Posterior cingulate gyrus (tissue), 11 donors: ENCODE measurements at regions of chr5 and their contacts with region 1.

Region 1: GRCh38 chr5:172770675-172771438 is at the start of gene DUSP1:
- DNase-seq: peak; percentile 97 to 100 (median 98)

Region 2: GRCh38 chr5:172716796-172717323 is 54.0 kb before region 1 on chr5:
- intact Hi-C with region 1: loop called (anchors 2 kb)
- DNase-seq: peak; percentile 74 to 97 (median 88)

Region 3: GRCh38 chr5:172833686-172834414 is 63.0 kb after region 1 on chr5 and contains the start of gene ERGIC1:
- intact Hi-C with region 1: loop called (anchors 5 kb)
- DNase-seq: peak; percentile 73 to 98 (median 86)

Region 4: GRCh38 chr5:172849606-172850453 is 79.0 kb after region 1 on chr5:
- intact Hi-C with region 1: no loop called
- DNase-seq: no peak

Region 5: DNA sequence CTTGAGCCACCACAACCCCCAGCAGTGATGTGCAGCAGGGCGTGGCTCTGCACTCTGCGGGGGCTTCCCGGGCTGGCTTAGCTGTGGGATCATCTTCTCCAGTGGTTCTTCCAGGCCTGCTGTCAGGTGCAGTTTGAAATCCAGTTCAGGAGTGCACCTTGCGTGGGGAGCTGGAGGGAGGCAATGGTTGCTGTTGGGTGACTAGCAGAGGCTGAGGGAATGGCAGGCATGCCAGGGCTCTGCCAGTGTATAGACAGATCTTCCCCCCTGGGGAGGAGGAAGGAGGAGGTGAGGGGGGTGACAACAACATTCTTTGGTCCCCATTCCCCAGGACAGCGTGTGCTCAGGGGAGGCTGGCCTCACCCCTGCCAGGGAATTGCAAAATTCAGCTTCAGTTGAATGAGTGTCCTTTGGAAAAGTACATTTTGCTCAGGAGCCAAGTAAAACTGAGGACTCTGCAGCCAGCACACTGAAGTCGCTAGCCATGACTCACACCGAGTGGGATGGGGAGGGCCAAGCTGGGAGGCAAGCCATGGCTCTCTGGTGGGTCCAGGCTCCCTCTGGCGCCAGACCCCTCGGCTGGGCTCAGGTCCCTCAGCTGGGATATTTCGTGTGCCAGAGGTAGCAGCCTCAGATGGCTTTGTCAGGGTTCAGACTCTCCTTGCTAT is 98.2 kb after region 1 on chr5:
- intact Hi-C with region 1: loop called (anchors 2 kb)
- DNase-seq: peak; percentile 46 to 95 (median 74)

Region 6: GRCh38 chr5:172932313-172933017 is 161.6 kb after region 1 on chr5:
- intact Hi-C with region 1: loop called (anchors 2 kb)
- DNase-seq: peak; percentile 64 to 97 (median 80)